ENCODE measurements at regions of chrX and their contacts with region 1.

Region 1: DNA sequence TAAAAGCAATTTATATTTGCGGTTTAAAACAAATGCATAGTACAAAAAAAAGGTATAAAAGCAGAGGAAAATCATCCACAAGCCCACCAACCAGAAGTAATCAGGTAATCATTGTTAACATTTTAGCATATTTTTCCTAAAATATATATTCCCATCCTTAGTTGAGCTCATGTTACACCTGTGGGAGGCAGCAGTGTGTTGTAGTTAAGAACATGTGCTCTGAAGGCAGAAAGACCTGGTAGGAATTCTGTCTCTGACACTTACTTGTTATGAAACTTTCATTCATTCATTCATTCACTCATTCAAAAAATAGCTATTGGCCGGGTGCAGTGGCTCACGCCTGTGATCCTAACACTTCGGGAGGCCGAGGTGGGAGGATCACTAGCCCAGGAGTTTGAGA is 15.4 kb upstream of the CDKL5 start:
- DNase-seq: peak; percentile 17
- H3K4me3 ChIP-seq: no peak overlapping the region
- H3K27ac ChIP-seq: no peak overlapping the region
- H3K4me1 ChIP-seq: no peaks in the 10 kb centered on the region
- H3K27me3 ChIP-seq: no peaks in the 10 kb centered on the region
- CTCF ChIP-seq: peak in 1 of 2 donors; percentile 3
- POLR2A ChIP-seq: no peak

Region 2: DNA sequence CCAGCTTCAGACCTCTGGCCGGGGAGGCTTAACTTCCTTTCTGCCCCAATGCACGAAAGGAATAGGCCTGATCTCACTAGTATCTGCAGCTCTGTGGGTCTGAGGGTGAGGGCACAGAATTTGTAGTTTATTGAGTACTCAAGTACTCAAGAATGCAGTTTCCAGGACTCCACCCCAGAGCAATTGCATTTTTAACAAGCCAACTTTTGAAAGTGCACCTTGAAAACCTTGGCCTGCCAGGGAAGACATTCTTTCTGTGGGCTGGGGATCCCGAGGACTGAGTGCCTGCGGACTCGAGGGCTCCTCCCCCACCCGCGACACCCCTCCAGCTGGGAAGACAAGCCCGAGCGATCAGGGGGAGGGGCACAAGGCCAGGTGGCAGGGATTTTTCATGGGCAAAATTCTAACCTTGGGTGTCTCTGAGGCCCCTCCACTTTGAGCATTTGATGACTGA is 239.5 kb after region 1 on chrX:
- CTCF ChIA-PET with region 1: no interaction called
- POLR2A ChIA-PET with region 1: no interaction called
- dilution Hi-C with region 1: no loop called
- intact Hi-C with region 1: no loop called
- DNase-seq: no peak
- H3K4me3 ChIP-seq: no peak overlapping the region
- H3K27ac ChIP-seq: no peak overlapping the region
- H3K4me1 ChIP-seq: no peaks in the 10 kb centered on the region
- H3K27me3 ChIP-seq: no peaks in the 10 kb centered on the region
- CTCF ChIP-seq: no peak
- POLR2A ChIP-seq: no peak

Region 3: DNA sequence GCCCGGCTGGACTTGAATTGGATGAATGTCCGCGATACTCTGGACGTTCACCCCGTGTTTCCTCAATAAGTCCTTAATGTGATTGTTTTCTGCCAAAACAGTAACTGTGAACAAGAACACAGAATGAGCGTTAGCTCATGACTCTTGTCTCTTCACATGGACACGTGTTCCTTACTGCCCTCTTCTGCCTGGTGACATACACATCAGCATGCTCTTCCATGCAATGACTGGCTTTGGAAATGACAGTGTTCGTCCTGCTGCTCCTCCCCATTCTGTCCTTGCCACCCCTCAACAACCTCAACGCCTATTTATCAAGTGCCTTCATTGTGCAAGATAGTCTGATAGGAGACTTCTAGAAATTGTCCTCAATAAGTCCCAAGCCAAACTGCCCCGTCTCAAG is 516.4 kb after region 1 on chrX:
- CTCF ChIA-PET with region 1: interaction called, 12 read pairs
- POLR2A ChIA-PET with region 1: no interaction called
- dilution Hi-C with region 1: no loop called
- intact Hi-C with region 1: no loop called
- DNase-seq: no peak
- H3K4me3 ChIP-seq: no peak overlapping the region
- H3K27ac ChIP-seq: no peak overlapping the region
- H3K4me1 ChIP-seq: no peaks in the 10 kb centered on the region
- H3K27me3 ChIP-seq: no peaks in the 10 kb centered on the region
- CTCF ChIP-seq: no peak
- POLR2A ChIP-seq: no peak